Left ventricle myocardium superior (tissue), 1 donor: ENCODE measurements at regions of chr7 and their contacts with region 1.

Region 1: DNA sequence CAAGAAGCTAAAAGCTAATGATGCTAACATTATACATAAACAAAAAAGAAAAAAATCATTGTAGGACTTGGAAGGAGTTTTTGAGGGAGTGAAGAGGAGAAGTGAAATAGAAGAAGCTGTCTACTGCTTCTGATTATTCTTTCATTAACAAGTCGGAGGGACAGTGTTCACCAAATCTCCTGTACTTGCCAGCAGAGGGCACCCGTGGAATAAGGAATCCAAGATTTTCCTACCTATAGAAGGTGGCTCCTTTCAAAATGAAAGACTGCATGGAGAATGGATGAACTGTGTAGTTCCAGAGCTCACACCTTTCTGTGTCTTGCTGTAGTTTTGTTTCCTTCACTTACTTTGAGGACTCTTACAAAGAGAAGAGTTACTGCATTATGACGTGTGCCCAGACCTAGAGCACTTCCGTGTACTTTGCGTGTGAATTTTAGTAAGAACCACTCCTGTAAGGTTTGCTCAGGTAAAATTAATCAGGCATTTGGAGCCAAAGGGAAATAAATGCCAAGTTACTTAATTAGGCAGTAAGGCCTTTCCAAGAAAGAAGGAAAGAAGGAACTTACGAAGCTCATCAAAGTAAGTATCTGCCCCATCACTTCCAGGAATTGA is 145.1 kb downstream of the SEMA3D start:
- DNase-seq: peak; percentile 41
- ATAC-seq: peak; percentile 61

Region 2: GRCh38 chr7:85186521-85187241 is 145.0 kb after region 1 on chr7 and contains the start of gene SEMA3D:
- intact Hi-C with region 1: loop called (anchors 10 kb)
- DNase-seq: peak; percentile 79
- ATAC-seq: peak; percentile 96
- total RNA-seq, gene SEMA3D: 0.94 TPM

Region 3: DNA sequence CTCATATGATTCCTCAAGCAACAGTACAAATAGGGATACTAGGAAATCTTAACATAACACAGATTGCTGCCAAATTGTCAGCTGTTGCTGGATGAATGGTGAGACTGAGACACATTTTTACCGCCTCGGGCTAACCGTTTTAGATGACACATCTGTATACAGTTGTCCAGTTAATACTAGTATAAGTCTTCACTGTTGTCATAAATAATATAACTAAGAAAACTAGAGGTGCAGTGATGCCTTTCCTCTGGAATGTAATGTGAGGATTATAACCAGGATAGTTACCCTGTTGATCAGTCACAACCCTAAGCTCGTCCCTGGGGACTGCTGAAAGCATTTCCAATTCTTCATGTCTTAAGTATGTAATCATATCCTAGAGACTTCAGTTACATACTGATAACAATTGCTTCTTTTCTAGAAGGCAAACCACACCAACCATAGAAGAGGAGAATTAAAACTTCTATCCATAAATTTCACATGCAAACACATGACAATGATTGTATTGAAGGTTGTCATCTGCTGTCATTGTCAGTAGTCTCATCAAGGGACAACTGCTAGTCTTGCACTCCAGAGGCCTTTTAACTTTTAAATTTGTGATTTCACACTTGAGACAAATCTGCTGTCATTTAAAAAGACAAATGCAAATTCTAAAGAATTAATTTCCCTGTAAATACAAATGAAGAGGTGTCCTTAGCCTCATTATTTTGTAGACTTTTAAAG is 245.6 kb after region 1 on chr7:
- intact Hi-C with region 1: no loop called
- DNase-seq: no peak
- ATAC-seq: no peak

Region 4: DNA sequence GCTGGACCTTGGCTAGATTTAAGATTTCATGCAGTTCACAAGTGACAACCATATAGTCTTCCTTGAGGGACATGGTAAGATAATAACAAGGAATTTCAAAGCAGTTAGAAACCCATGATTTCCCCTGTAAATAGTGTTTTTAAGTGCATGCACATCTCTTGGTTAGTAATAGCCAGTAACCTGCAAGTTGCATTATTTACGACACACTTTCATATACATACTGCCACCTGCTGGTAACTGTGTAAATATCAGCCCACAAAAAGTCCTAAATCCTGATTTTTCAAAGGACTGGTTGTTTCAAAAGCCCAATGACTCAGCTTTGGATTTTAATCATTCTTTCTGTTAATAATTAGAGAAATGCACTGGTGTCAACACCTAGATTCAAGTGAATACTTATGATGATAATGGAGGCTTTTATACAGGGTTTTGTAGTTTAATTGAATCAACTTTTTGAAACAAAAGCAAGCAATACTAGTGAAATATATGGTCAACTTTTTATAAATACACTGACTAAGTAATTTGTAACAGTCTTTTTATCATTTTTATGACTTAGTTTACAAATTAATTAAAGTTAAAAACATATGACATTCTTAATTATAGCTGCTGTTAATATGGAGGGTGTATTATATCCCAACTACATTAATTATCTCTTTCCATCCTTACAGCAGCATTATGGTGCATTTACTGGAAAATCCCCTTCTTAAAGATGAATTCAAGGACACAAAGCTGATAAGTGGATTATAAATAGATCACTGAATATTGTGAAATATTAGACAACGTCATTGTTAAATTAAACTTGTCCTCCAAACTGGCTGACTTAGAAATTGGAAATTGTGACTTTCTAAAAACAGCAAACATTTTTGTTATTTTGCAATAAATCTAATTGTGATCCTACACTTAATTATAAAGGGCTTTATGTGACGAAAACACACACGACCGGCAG is 512.8 kb after region 1 on chr7:
- intact Hi-C with region 1: loop called (anchors 2 kb)
- DNase-seq: no peak
- ATAC-seq: no peak